CD4-positive, alpha-beta memory T cell (primary cell): ENCODE measurements at regions of chr14 and their contacts with region 1.

Region 1: GRCh38 chr14:98912655-98913054 is 359.3 kb downstream of the BCL11B start:
- DNase-seq: peak in 4 of 5 donors; percentile 34 to 55 (median 52)
- H3K4me3 ChIP-seq: no peak overlapping the region
- H3K4me3 Mint-ChIP-seq: peak overlapping the region in 6 of 8 donors; percentile 5 to 38 (median 16)
- H3K27ac ChIP-seq: no peak overlapping the region
- H3K27ac Mint-ChIP-seq: peak overlapping the region; percentile 10 to 92 (median 77)
- H3K4me1 ChIP-seq: peaks cover 20% of the 10 kb centered on the region
- H3K4me1 Mint-ChIP-seq: peaks cover 24 to 44% (median 31%) of the 10 kb centered on the region in 4 donors
- H3K27me3 ChIP-seq: no peaks in the 10 kb centered on the region
- H3K27me3 Mint-ChIP-seq: peaks cover 0 to 1% of the 10 kb centered on the region in 2 donors

Region 2: GRCh38 chr14:98819132-98819866 is 93.4 kb before region 1 on chr14:
- CTCF ChIA-PET with region 1: no interaction called
- POLR2A ChIA-PET with region 1: no interaction called
- intact Hi-C with region 1: no loop called
- DNase-seq: no peak
- H3K4me3 ChIP-seq: no peak overlapping the region
- H3K4me3 Mint-ChIP-seq: no peak overlapping the region
- H3K27ac ChIP-seq: no peak overlapping the region
- H3K27ac Mint-ChIP-seq: no peak overlapping the region
- H3K4me1 ChIP-seq: no peaks in the 10 kb centered on the region
- H3K4me1 Mint-ChIP-seq: peaks cover 0 to 13% (median 2%) of the 10 kb centered on the region in 4 donors
- H3K27me3 ChIP-seq: no peaks in the 10 kb centered on the region
- H3K27me3 Mint-ChIP-seq: peaks cover 0 to 5% of the 10 kb centered on the region in 2 donors

Region 3: DNA sequence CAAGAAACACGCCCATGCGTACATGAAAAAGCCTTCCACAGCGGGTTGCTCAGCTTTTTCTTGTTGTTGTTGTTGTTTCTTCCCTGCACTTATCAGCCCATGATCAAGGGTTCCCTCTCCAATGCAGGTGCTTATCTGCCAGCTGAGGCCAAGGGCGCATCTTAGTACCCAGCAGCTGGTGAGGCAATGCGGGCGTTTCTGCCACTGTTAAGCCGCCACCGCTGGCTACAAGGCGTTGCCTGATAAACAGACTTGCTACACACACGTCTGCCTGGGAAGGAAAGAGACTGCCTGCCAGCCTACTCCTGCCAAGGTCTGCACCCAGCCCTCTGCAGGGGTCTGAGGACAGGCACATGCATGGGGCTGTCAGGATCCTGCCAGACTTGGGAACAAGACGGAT is 13.5 kb after region 1 on chr14:
- CTCF ChIA-PET with region 1: interaction called, 8 read pairs
- POLR2A ChIA-PET with region 1: interaction called, 29 read pairs
- intact Hi-C with region 1: no loop called
- DNase-seq: peak; percentile 49 to 60 (median 56)
- H3K4me3 ChIP-seq: no peak overlapping the region
- H3K4me3 Mint-ChIP-seq: peak overlapping the region in 7 of 8 donors; percentile 29 to 71 (median 58)
- H3K27ac ChIP-seq: no peak overlapping the region
- H3K27ac Mint-ChIP-seq: peak overlapping the region; percentile 59 to 89 (median 80)
- H3K4me1 ChIP-seq: peaks cover 42% of the 10 kb centered on the region
- H3K4me1 Mint-ChIP-seq: peaks cover 30 to 55% (median 42%) of the 10 kb centered on the region in 4 donors
- H3K27me3 ChIP-seq: no peaks in the 10 kb centered on the region
- H3K27me3 Mint-ChIP-seq: no peaks in the 10 kb centered on the region

Region 4: GRCh38 chr14:98931911-98932310 is 19.3 kb after region 1 on chr14:
- CTCF ChIA-PET with region 1: interaction called, 8 read pairs
- POLR2A ChIA-PET with region 1: interaction called, 29 read pairs
- intact Hi-C with region 1: no loop called
- DNase-seq: peak; percentile 82 to 85 (median 84)
- H3K4me3 ChIP-seq: peak overlapping the region in 1 of 2 donors; percentile 41
- H3K4me3 Mint-ChIP-seq: peak overlapping the region; percentile 68 to 91 (median 83)
- H3K27ac ChIP-seq: peak overlapping the region; percentile 16
- H3K27ac Mint-ChIP-seq: peak overlapping the region; percentile 79 to 97 (median 91)
- H3K4me1 ChIP-seq: peaks cover 66% of the 10 kb centered on the region
- H3K4me1 Mint-ChIP-seq: peaks cover 62 to 91% (median 78%) of the 10 kb centered on the region in 4 donors
- H3K27me3 ChIP-seq: no peaks in the 10 kb centered on the region
- H3K27me3 Mint-ChIP-seq: no peaks in the 10 kb centered on the region

Region 5: GRCh38 chr14:98984719-98985041 is 72.0 kb after region 1 on chr14:
- CTCF ChIA-PET with region 1: interaction called, 5 read pairs
- POLR2A ChIA-PET with region 1: interaction called, 14 read pairs
- intact Hi-C with region 1: loop called (anchors 1 kb)
- DNase-seq: peak; percentile 81 to 87 (median 87)
- H3K4me3 ChIP-seq: peak overlapping the region in 1 of 2 donors; percentile 16
- H3K4me3 Mint-ChIP-seq: peak overlapping the region; percentile 42 to 93 (median 81)
- H3K27ac ChIP-seq: peak overlapping the region; percentile 47
- H3K27ac Mint-ChIP-seq: peak overlapping the region; percentile 92 to 99 (median 97)
- H3K4me1 ChIP-seq: peaks cover 37% of the 10 kb centered on the region
- H3K4me1 Mint-ChIP-seq: peaks cover 32 to 69% (median 53%) of the 10 kb centered on the region in 4 donors
- H3K27me3 ChIP-seq: no peaks in the 10 kb centered on the region
- H3K27me3 Mint-ChIP-seq: no peaks in the 10 kb centered on the region